Posterior vena cava (tissue), 2 donors: ENCODE measurements at regions of chr3 and their contacts with region 1.

Region 1: DNA sequence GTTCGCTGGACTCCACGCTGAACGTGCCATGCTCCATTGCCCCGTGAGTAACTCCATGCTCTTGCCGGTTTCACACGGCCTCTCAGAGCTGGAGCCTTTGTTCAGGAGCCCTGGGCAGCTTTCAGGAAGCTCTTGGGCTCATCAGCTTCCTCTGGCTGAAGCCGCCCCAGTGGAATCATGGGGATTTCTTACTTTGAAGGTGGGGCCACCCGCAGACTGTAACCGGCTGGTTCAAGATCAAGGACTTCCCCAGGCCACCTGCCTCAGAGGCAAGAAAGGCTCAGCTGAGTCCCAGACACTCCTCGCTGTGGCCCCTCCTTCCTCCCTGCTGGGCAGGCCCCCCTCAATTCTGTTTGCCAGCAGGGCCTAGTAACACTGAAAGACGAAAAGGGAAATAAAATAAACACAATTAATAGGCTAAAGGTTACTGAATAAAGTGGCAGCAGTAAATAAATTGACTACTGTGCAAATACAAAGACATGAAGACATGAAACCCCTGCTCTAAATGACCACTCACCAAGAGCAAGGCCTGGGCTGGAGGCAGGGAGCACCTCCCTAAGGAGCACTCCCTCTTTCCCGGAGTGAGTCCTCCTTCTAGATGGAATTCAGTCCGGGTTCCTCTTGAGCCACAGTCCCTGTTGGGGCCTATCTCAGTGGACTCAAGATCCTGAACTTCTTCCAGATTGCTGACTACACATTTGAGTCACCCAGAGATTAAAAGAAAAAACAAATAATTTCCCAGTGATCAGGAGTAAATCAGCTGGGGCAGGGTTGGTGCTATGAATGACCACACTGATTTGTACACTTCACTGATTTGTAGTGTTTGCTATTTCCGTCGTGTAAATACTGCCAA is 51.0 kb downstream of the ZDHHC19 start:
- DNase-seq: no peak

Region 2: DNA sequence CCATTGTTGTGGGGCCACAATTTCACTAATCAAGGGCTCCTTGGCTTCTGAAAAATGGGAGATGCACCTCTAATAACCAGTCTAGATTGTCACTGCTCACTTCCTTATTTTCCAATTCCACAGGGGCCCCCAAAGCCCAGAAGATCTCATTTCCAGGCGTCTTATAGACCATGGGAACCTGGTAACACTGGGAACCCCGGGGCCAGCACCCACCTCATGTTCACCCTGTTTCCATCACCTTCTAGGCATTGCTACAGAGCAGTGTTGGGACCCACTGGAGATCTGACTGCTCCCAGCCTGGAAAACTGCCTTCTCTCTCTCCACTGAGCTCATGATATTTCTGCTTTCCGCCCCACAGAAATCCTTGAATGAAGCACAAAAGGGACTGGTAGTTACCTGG is 139.8 kb before region 1 on chr3:
- intact Hi-C with region 1: loop called in 1 of 2 experiments (anchors 10 kb)
- DNase-seq: no peak

Region 3: GRCh38 chr3:196739671-196740480 is 579.7 kb after region 1 on chr3 and contains the start of gene PAK2:
- intact Hi-C with region 1: loop called in 1 of 2 experiments (anchors 10 kb)
- DNase-seq: peak; percentile 98
- total RNA-seq, gene PAK2: 39.7 to 57.9 TPM